GM18951 (cell line): ENCODE measurements at regions of chr14 and their contacts with region 1.

Region 1: GRCh38 chr14:22386924-22387775 is 201.9 kb downstream of the DAD1 start:
- POLR2A ChIP-seq: no peak

Region 2: GRCh38 chr14:22319526-22320361 is 67.4 kb before region 1 on chr14:
- in situ Hi-C with region 1: loop called (anchors 5 kb)
- POLR2A ChIP-seq: no peak

Region 3: DNA sequence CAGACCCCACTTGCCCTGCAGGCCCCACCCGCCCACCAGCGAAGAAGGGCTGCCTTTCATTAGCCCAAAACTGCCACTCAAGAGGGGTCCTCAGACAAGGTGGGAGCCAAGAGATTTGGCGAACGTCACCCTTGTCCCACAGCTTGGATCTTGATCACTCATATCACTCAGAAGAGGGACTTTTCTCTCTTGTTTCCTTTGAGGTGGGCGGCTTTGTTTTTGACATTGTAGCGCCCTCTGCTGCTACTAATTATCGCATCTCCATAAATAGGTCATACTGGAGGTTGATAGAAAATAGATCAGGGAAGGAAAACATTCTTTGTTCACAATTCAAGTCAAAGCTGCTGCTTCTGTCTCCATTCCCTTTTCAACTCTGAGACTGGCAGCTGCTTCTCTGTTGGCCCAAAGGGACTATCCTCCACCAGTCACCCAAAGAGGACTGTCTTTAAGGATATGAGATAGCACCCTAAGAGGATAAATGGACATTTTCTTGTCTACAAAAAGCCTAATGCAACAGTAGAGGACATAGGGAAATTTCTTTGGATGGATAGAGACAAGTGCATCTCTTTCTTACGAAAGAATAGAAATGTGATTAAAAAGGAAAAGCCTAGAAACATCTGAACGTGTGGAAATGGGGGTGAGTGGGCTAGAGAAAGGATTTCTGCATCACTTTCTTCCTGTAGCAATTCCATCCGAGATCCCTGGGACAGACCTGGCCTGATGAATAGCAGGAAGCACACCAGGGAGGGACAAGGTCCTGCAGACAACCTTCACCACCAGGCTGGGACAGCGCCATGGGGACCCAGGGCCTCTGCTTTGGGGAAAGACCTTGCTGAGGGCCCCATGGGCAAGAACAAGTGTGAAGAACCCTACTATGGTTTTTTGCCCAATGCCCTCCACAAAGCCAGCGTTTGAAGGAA is 86.0 kb after region 1 on chr14:
- in situ Hi-C with region 1: loop called (anchors 5 kb)
- POLR2A ChIP-seq: no peak

Region 4: GRCh38 chr14:22570132-22570949 is 183.2 kb after region 1 on chr14:
- in situ Hi-C with region 1: loop called (anchors 5 kb)
- POLR2A ChIP-seq: no peak

Region 5: GRCh38 chr14:22872033-22872832 is 485.1 kb after region 1 on chr14:
- in situ Hi-C with region 1: loop called (anchors 25 kb)
- POLR2A ChIP-seq: no peak